ENCODE measurements at regions of chr3 and their contacts with region 1.

Region 1: GRCh38 chr3:183039331-183039730 is 59.0 kb upstream of the DCUN1D1 start:
- DNase-seq: no peak
- ATAC-seq: no peak
- H3K4me3 ChIP-seq: no peak overlapping the region
- H3K27ac ChIP-seq: no peak overlapping the region
- H3K4me1 ChIP-seq: no peaks in the 10 kb centered on the region
- CTCF ChIP-seq: no peak
- EP300 ChIP-seq: no peak
- POLR2A ChIP-seq: no peak
- RAD21 ChIP-seq: no peak

Region 2: DNA sequence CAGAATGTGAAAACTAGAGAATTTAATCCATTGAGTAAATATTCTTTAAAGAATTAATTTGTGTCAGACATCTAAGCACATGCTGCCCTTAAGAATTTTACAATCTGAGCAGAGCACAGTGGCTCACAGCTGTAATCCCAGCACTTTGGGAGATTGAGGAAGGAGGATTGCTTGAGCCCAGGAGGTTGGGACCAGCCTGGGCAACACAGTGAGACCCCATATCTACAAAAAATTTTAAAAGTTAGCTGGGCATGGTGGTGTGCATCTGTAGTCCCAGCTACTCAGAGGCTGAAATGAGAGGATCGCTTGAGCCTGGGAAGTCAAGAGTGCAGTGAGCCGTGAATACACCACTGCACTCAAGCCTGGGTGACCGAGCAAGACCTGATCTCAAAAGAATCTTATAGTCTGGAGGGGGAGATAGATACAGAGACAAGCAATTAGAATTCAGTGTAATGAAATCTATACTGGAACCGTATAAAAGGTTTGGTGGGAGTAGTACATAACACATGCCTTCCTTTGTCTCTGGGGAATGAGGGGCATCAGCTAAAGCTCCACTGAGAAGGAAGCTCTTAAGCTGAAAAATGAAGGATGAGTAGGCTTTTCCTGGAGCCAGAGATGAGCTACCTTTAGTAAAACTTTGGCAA is 224.8 kb before region 1 on chr3:
- CTCF ChIA-PET with region 1: no interaction called
- POLR2A ChIA-PET with region 1: interaction called, 14 read pairs
- DNase-seq: no peak
- ATAC-seq: no peak
- H3K4me3 ChIP-seq: no peak overlapping the region
- H3K27ac ChIP-seq: no peak overlapping the region
- H3K4me1 ChIP-seq: peaks cover 5% of the 10 kb centered on the region; the same call in 2 of the 3 replicates
- CTCF ChIP-seq: no peak
- EP300 ChIP-seq: no peak
- POLR2A ChIP-seq: no peak
- RAD21 ChIP-seq: no peak

Measured in A549 (cell line).